Activated B cell treated with CpG ODN at 0.5 μM for 24 hours (primary cell): ENCODE measurements at regions of chr3 and their contacts with region 1.

Region 1: DNA sequence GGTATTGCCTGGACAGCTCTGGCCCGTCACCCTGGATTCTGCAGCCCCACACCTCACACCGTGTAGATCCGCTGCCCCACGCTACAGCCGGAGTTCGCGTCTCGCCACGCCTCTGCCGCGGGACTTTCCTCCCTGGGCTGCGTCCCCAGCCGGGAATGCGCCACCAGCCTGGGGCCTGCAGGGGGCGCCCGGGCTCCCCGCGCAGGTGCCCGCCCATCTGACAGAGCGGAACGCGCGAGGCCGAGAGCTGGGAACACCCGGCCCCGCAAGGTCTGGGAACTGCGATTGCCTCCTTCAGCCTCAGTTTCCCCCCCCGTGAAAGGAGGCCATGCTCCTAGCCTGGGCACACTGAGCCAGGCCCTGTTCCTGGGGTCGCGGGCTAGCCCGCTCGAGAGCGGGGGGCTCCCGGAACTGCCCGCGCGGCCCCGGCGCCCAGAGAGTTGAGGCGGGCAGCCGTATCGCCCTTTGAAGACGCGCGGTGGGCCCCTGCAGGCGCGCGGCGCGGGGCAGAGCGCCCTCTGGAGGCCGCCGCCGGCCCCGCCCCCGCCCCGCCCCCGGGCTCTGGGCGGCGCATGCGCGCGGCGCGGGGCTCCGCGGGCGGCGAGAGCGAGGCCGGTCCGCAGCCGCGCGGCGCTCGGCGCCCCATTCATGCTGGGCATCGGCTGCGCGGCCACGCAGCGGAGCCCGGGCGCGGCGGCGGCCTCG is at the start of gene PLXNA1:
- DNase-seq: peak; percentile 92
- ATAC-seq: peak; percentile 75
- H3K4me3 Mint-ChIP-seq: peak within 1 kb of the TSS; percentile 87
- H3K27ac Mint-ChIP-seq: peak within 1 kb of the TSS; percentile 97
- H3K4me1 Mint-ChIP-seq: peaks cover 29% of the 10 kb centered on the region
- H3K27me3 Mint-ChIP-seq: peaks cover 4% of the 10 kb centered on the region
- CTCF ChIP-seq: peak; percentile 43
- total RNA-seq, gene PLXNA1: 47.2 and 55.2 TPM in 2 replicates

Region 2: GRCh38 chr3:126357295-126358037 is 625.2 kb before region 1 on chr3 and contains the start of gene KLF15:
- CTCF ChIA-PET with region 1: no interaction called
- POLR2A ChIA-PET with region 1: no interaction called
- intact Hi-C with region 1: loop called (anchors 5 kb)
- DNase-seq: peak; percentile 76
- ATAC-seq: peak; percentile 93
- H3K4me3 Mint-ChIP-seq: peak within 1 kb of the TSS; percentile 88
- H3K27ac Mint-ChIP-seq: no peak within 1 kb of the TSS
- H3K4me1 Mint-ChIP-seq: peaks cover 16% of the 10 kb centered on the region
- H3K27me3 Mint-ChIP-seq: peaks cover 35% of the 10 kb centered on the region
- CTCF ChIP-seq: no peak
- total RNA-seq, gene KLF15: 0.31 and 0.39 TPM in 2 replicates

Region 3: GRCh38 chr3:126679318-126679751 is 303.3 kb before region 1 on chr3:
- CTCF ChIA-PET with region 1: interaction called, 7 read pairs
- POLR2A ChIA-PET with region 1: interaction called, 3 read pairs
- intact Hi-C with region 1: loop called (anchors 1 kb)
- DNase-seq: peak; percentile 78
- ATAC-seq: peak; percentile 86
- H3K4me3 Mint-ChIP-seq: peak overlapping the region; percentile 67
- H3K27ac Mint-ChIP-seq: no peak overlapping the region
- H3K4me1 Mint-ChIP-seq: peaks cover 25% of the 10 kb centered on the region
- H3K27me3 Mint-ChIP-seq: peaks cover 5% of the 10 kb centered on the region
- CTCF ChIP-seq: peak; percentile 86

Region 4: GRCh38 chr3:126852511-126852910 is 130.1 kb before region 1 on chr3:
- CTCF ChIA-PET with region 1: interaction called, 7 read pairs
- POLR2A ChIA-PET with region 1: no interaction called
- intact Hi-C with region 1: loop called (anchors 2 kb)
- DNase-seq: no peak
- ATAC-seq: no peak
- H3K4me3 Mint-ChIP-seq: no peak overlapping the region
- H3K27ac Mint-ChIP-seq: no peak overlapping the region
- H3K4me1 Mint-ChIP-seq: no peaks in the 10 kb centered on the region
- H3K27me3 Mint-ChIP-seq: no peaks in the 10 kb centered on the region
- CTCF ChIP-seq: no peak

Region 5: DNA sequence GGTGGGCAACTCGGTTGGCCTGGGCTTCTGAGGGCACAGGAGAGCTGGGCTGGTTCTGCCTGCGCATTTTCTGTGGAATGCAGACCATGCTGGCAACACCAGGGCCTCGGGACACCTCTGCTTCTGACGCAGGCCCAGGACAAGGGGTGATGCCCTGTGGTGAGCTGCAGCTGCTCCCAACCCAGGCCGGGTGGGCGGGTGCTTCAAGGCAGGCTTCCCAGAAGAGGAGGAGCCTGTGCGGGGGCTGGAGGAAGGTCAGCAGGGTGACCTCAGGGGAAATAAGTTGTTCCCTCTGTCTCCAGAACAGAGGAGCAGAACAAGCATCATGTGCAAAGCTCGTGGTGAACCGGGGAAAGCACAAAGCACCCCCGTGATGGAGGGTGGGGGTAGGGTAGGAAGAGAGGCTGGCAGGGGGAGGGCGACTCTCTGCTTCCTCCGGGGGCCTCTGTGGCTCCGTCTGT is 10.7 kb before region 1 on chr3:
- CTCF ChIA-PET with region 1: interaction called, 7 read pairs
- POLR2A ChIA-PET with region 1: interaction called, 25 read pairs
- intact Hi-C with region 1: loop called (anchors 1 kb)
- DNase-seq: peak; percentile 41
- ATAC-seq: peak; percentile 87
- H3K4me3 Mint-ChIP-seq: peak overlapping the region; percentile 19
- H3K27ac Mint-ChIP-seq: peak overlapping the region; percentile 46
- H3K4me1 Mint-ChIP-seq: peaks cover 15% of the 10 kb centered on the region
- H3K27me3 Mint-ChIP-seq: peaks cover 18% of the 10 kb centered on the region
- CTCF ChIP-seq: no peak

Region 6: GRCh38 chr3:128075516-128076482 is 1093.2 kb after region 1 on chr3:
- CTCF ChIA-PET with region 1: no interaction called
- POLR2A ChIA-PET with region 1: no interaction called
- intact Hi-C with region 1: loop called (anchors 5 kb)
- DNase-seq: peak; percentile 93
- ATAC-seq: peak; percentile 88
- H3K4me3 Mint-ChIP-seq: peak overlapping the region; percentile 79
- H3K27ac Mint-ChIP-seq: no peak overlapping the region
- H3K4me1 Mint-ChIP-seq: peaks cover 13% of the 10 kb centered on the region
- H3K27me3 Mint-ChIP-seq: no peaks in the 10 kb centered on the region
- CTCF ChIP-seq: peak; percentile 48